HCT116 (cell line): ENCODE measurements at regions of chr6 and their contacts with region 1.

Region 1: DNA sequence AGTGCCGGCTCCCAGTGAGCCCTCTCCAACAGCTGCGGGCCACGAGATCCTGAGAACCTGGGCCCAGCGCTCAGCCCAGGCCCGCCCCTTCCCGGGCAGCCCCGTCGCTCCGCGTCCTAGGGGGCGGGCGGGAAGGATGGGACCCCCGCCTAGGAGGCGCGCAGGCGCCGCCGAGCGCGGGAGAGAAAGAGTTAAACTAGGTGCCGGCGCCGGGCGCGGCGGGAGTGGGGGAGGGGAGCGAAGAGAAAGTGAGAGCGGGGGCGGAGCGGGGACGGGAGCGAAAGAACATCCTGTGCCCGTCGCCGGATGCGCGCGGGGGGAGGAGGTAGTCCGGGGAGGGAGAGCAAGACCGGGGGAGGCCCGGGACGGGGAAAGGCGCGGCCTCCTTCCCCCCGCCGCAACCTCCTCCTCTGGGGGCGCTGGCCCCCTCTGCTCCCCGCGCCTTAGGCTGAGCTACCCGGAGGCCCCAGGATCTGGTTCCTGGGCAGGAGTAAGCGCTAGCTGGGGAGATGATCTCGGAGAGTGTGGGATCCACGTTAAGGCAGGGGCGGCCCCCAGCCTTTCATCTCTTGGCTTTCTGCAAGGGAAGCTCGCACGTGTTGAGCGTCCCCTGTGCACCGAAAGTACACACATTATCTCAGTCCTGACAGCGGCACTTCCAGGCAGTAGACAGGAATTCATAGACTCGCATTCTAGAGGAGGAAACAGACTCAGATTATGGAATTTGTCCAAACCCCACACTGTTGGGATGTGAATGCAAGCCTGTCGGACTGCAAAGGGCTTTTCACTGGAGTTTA is 4.9 kb upstream of the ARMC12 start:
- DNase-seq: no peak
- ATAC-seq: peak; percentile 56
- H3K4me3 ChIP-seq: peak overlapping the region; percentile 54 to 67
- H3K27ac ChIP-seq: peak overlapping the region; percentile 95
- H3K4me1 ChIP-seq: peaks cover 54 to 67% of the 10 kb centered on the region in 2 experiments
- H3K27me3 ChIP-seq: no peaks in the 10 kb centered on the region
- CTCF ChIP-seq: no peak
- POLR2A ChIP-seq: no peak
- RAD21 ChIP-seq: no peak

Region 2: GRCh38 chr6:35297601-35298481 is 434.1 kb before region 1 on chr6 and contains the start of gene DEF6:
- CTCF ChIA-PET with region 1: interaction called, 5 read pairs
- POLR2A ChIA-PET with region 1: no interaction called
- RAD21 ChIA-PET with region 1: no interaction called
- intact Hi-C with region 1: loop called (anchors 2 kb)
- DNase-seq: peak; percentile 81
- ATAC-seq: peak; percentile 93
- H3K4me3 ChIP-seq: peak within 1 kb of the TSS; percentile 84 to 94
- H3K27ac ChIP-seq: peak within 1 kb of the TSS; percentile 70
- H3K4me1 ChIP-seq: peaks cover 14 to 39% of the 10 kb centered on the region in 2 experiments
- H3K27me3 ChIP-seq: no peaks in the 10 kb centered on the region
- CTCF ChIP-seq: peak; percentile 89 to 96 (median 89)
- POLR2A ChIP-seq: peak; percentile 53
- RAD21 ChIP-seq: peak; percentile 100
- total RNA-seq, gene DEF6: 40.4 TPM

Region 3: DNA sequence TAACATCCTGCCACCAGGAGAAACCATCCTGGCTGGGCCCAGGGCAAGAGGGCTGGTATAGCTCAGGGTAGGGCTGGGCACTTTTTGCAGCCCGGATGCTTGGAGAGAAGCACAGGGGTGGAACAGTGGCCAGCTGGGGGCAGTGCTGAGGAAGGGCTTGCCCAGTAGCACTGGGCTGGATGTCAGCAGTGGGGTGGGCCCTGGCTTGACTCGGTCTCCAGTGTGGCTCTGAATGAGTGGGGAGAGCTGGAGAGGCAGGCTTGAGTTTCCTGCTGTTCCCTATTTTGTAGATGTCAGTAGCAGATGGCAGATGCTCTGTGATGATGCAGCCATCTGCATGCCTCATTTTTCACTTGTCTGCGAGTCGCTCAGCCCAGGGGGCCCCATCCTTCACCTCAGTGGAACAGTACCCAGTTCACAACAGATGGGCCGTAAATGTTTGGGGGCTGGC is 162.9 kb before region 1 on chr6:
- CTCF ChIA-PET with region 1: interaction called, 11 read pairs
- POLR2A ChIA-PET with region 1: no interaction called
- RAD21 ChIA-PET with region 1: no interaction called
- intact Hi-C with region 1: no loop called
- DNase-seq: no peak
- ATAC-seq: peak; percentile 97
- H3K4me3 ChIP-seq: no peak overlapping the region
- H3K27ac ChIP-seq: no peak overlapping the region
- H3K4me1 ChIP-seq: no peaks in the 10 kb centered on the region
- H3K27me3 ChIP-seq: 0 out of 2 replicates have a peak, but pooled peaks cover 8% of the 10 kb centered on the region
- CTCF ChIP-seq: peak in 2 of 3 experiments; percentile 61 to 77; a peak in 4 of 6 replicates
- POLR2A ChIP-seq: no peak
- RAD21 ChIP-seq: peak; percentile 43

Region 4: DNA sequence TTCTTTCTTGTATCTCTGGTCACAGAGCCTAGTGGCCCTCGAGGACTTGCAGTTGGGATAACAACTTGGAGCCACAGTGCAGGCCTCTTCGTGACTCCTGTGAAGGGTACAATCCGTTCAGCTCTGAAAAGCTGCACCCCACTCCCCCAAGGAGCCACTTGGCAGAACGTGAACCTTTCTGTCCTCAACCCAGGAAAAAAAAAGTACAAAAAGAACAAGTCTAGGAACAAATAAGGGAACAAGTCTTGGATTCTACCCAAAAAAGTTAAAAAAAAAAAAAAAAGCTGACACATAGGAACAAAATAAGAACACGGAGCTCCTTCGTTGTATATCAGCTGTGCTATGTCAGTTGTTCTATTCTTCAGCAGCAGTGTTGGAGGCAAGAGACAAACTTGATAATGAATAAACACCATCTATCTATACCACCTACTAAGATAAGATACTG is 141.3 kb before region 1 on chr6:
- CTCF ChIA-PET with region 1: interaction called, 73 read pairs
- POLR2A ChIA-PET with region 1: no interaction called
- RAD21 ChIA-PET with region 1: no interaction called
- intact Hi-C with region 1: no loop called
- DNase-seq: no peak
- ATAC-seq: no peak
- H3K4me3 ChIP-seq: no peak overlapping the region
- H3K27ac ChIP-seq: no peak overlapping the region
- H3K4me1 ChIP-seq: peaks cover 26 to 44% of the 10 kb centered on the region in 2 experiments
- H3K27me3 ChIP-seq: no peaks in the 10 kb centered on the region
- CTCF ChIP-seq: no peak
- POLR2A ChIP-seq: no peak
- RAD21 ChIP-seq: no peak

Region 5: DNA sequence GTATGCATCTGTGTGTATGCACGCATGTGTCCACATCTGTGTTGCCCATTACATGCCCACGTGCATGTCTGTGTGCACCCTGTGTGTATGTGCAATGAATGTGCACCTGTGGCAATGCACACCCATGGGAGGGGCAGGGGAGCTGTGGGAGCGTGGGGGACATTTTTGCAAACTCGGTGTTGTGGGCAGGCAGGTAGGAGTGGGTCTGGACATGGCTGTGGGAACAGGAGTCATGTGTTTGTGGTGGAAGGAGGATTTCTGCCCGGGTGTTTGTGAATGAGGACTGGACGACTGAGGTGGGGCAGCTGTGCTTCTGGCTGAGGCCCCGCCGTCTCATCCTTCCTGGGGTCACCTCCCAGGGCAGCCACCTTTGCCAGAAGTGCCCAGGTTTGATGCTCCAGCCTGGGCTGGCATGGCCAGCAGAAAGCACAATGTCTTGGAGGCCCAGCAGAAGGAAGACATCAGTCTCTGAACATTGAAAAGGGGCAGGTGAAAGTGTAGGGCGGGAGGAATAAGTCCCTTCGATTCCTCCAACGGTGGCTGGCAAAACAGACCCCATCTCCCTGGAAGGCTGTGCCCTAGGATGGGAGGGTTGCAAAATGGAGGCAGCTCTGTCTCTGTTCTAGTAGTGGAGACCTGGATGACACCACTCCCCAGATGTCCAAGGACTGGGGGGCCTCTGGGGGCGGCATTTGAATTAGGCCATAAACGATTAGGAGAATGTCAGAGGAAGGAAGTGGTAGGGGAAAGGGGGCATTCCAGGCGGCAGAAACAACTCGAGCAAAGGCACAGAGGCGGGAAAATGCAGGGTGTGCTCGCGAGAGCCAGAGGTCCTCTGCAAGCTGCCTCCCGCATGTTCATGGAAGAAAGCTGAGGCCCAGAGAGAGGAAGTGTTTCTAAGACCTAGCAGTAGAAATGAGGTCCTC is 14.2 kb before region 1 on chr6:
- CTCF ChIA-PET with region 1: no interaction called
- POLR2A ChIA-PET with region 1: no interaction called
- RAD21 ChIA-PET with region 1: no interaction called
- intact Hi-C with region 1: no loop called
- DNase-seq: no peak
- ATAC-seq: no peak
- H3K4me3 ChIP-seq: no peak overlapping the region
- H3K27ac ChIP-seq: no peak overlapping the region
- H3K4me1 ChIP-seq: no peaks in the 10 kb centered on the region
- H3K27me3 ChIP-seq: no peaks in the 10 kb centered on the region; the same call in 1 of the 2 replicates
- CTCF ChIP-seq: no peak
- POLR2A ChIP-seq: no peak
- RAD21 ChIP-seq: no peak

Region 6: DNA sequence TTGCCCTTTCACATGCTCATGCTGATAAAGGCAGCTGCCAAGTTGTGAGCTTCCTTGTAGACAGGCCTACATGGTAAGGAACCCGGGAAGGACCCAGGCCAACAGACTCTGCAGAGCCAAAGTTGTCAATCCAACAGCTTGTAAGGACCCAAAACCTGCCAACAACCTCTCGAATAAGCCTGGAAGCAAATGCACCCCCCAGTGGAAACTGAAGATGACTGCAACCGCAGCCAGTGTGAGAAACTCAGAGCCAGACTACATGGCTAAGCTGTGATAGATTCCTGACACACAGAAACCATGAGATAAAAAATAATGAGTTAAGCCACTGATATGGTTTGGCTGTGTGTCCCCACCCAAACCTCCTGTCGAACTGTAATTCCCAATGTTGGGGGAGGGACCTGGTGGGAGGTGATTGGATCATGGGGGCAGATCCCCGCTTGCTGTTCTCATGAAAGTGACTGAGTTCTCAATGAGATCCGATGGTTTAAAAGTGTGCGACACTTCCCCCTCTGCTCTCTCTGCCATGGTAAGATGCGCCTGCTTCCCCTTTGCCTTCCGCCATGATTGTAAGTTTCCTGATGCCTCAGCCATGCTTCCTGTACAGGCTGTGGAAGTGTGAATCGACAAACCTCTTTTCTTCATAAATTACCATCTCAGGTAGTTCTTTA is 25.7 kb after region 1 on chr6:
- CTCF ChIA-PET with region 1: interaction called, 12 read pairs
- POLR2A ChIA-PET with region 1: interaction called, 4 read pairs
- RAD21 ChIA-PET with region 1: no interaction called
- intact Hi-C with region 1: no loop called
- DNase-seq: peak; percentile 71
- ATAC-seq: peak; percentile 94
- H3K4me3 ChIP-seq: no peak overlapping the region
- H3K27ac ChIP-seq: no peak overlapping the region
- H3K4me1 ChIP-seq: peaks cover 0 to 13% of the 10 kb centered on the region in 2 experiments; a peak in 1 of 4 replicates
- H3K27me3 ChIP-seq: no peaks in the 10 kb centered on the region
- CTCF ChIP-seq: peak; percentile 49 to 86 (median 79); a peak in 5 of 6 replicates
- POLR2A ChIP-seq: no peak
- RAD21 ChIP-seq: peak; percentile 65